ENCODE measurements at regions of chrX and their contacts with region 1.

Region 1: GRCh38 chrX:106170318-106170717 is 2.2 kb downstream of the PWWP3B start:
- DNase-seq: no peak
- ATAC-seq: peak in 3 of 4 donors; percentile 48 to 65 (median 53)
- H3K4me3 ChIP-seq: no peak overlapping the region
- H3K27ac ChIP-seq: no peak overlapping the region
- H3K4me1 ChIP-seq: no peaks in the 10 kb centered on the region
- H3K27me3 ChIP-seq: peaks cover 0 to 12% (median 0%) of the 10 kb centered on the region in 3 donors
- CTCF ChIP-seq: peak; percentile 56

Region 2: DNA sequence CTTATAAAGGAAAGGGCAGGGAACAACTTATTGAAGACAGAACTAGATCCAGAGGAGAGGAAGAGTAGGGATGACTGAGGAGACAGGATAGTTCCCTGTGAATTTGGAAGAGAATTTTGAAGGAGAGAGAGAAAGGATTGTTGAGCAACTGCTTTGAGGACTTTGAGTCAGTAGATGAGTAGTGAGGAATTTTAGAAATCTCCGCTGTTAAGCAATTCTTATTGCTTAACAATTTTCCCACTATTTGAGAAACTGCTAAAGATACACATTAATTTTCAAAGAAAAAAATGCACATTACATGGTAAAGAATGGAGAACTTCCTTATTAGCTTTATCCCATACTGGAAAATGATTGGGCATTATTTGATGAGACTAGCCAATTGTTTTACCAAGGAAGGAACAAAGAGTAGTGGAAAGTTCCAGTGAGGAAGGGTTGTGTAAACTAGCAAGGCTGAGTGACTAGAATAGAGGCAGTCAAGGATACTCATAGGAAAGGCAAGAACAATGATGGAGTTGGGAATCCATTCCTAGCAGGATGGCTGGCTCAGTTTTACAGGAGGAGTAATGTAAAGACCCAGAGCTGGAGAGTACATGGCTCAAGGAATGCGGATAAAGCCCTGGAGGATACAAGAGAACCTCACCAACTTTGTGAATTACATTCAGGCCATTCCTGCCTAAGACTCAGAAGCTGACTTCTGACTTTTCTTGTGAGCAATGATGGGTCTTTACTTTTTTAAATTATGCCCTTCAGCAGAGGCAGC is 464.1 kb before region 1 on chrX:
- intact Hi-C with region 1: no loop called
- DNase-seq: no peak
- ATAC-seq: no peak
- H3K4me3 ChIP-seq: no peak overlapping the region
- H3K27ac ChIP-seq: no peak overlapping the region
- H3K4me1 ChIP-seq: no peaks in the 10 kb centered on the region
- H3K27me3 ChIP-seq: no peaks in the 10 kb centered on the region
- CTCF ChIP-seq: no peak

Region 3: GRCh38 chrX:105900873-105901272 is 269.4 kb before region 1 on chrX:
- intact Hi-C with region 1: no loop called
- DNase-seq: no peak
- ATAC-seq: no peak
- H3K4me3 ChIP-seq: no peak overlapping the region
- H3K27ac ChIP-seq: no peak overlapping the region
- H3K4me1 ChIP-seq: no peaks in the 10 kb centered on the region
- H3K27me3 ChIP-seq: peaks cover 0 to 32% (median 0%) of the 10 kb centered on the region in 3 donors
- CTCF ChIP-seq: no peak

Region 4: DNA sequence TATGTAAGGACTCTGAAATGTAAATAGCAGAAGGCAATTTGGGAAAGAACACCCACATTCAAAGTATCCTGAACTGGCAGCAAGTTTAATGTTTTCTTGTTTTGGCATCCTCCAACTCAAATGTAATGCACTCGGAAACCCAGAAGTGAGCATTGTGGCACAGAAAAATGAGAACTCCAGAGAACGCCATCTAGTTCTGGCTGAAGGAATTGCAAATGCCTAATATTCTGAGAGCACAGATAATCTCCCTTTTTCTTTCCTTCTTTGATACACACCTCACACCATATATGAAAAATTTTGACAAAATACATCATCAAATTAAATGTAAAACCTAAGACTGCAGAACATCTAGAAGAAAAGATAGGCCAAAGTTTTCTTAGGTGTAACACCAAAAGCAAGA is 49.9 kb after region 1 on chrX:
- intact Hi-C with region 1: loop called in 1 of 2 experiments (anchors 5 kb)
- DNase-seq: no peak
- ATAC-seq: no peak
- H3K4me3 ChIP-seq: no peak overlapping the region
- H3K27ac ChIP-seq: no peak overlapping the region
- H3K4me1 ChIP-seq: no peaks in the 10 kb centered on the region
- H3K27me3 ChIP-seq: peaks cover 0 to 8% (median 0%) of the 10 kb centered on the region in 3 donors
- CTCF ChIP-seq: peak; percentile 30

Region 5: DNA sequence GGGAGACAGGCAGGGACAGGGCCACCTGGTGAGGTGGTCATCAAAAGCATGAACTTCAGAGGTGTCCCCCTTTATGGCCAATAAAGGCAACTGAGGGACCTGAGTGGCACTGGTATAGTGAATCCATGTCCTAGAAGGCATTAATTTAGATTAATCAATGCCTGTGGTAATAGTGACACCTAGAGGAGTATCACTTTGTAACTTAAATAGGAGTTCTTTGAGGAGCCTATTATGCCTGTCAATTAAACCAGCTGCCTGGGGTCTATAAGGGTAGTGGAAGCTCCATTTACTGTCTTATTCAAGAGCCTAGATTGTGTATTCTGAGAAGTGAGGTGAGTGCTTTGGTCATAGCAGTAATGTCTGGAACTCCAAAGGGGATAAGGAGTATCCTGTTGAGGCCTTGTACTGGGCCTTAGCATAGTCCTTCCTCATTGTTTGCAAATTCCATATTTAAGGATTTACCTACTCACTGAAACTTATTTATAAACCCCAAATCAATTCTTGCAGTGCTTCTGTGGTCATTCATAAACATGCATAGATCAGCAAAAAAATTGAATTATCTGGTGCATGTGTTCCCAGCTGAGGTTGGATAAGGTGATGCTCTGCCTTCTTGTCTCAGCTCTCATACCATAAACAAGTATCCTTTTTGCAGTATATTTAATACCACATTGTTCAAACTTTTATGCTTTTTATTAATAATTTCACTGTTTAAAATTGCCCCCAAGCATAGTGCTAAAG is 227.7 kb after region 1 on chrX:
- intact Hi-C with region 1: loop called (anchors 2 to 10 kb)
- DNase-seq: no peak
- ATAC-seq: peak in 2 of 4 donors; percentile 36 to 63
- H3K4me3 ChIP-seq: no peak overlapping the region
- H3K27ac ChIP-seq: no peak overlapping the region
- H3K4me1 ChIP-seq: no peaks in the 10 kb centered on the region
- H3K27me3 ChIP-seq: peaks cover 0 to 10% (median 0%) of the 10 kb centered on the region in 3 donors
- CTCF ChIP-seq: peak; percentile 25

Region 6: DNA sequence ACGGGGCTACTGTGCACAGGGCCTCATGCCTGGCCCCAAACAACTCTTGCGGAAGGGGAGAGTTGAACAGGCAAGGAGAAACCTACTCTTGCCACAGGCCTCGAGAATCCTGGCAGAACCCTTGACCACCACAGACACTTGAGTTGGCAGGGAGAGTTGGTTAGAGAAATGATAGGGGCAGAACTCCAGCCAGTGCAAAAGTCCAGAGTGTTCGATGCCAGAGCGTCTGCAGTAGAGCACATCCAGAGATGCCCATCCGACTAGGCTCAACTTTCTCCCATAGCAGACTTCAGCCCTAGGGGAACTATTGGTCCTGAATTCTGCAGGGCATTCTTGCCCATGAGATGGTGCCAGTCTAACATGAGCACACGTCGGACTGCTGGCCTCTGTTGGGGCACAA is 396.0 kb after region 1 on chrX:
- intact Hi-C with region 1: no loop called
- DNase-seq: no peak
- ATAC-seq: no peak
- H3K4me3 ChIP-seq: no peak overlapping the region
- H3K27ac ChIP-seq: no peak overlapping the region
- H3K4me1 ChIP-seq: no peaks in the 10 kb centered on the region
- H3K27me3 ChIP-seq: peaks cover 0 to 27% (median 0%) of the 10 kb centered on the region in 3 donors
- CTCF ChIP-seq: no peak